Mammary epithelial cell (primary cell): ENCODE measurements at regions of chr2 and their contacts with region 1.

Region 1: GRCh38 chr2:181715033-181715630 is 34.8 kb upstream of the NEUROD1 start:
- DNase-seq: peak; percentile 63
- H3K4me3 ChIP-seq: no peak overlapping the region
- H3K27ac ChIP-seq: no peak overlapping the region
- H3K4me1 ChIP-seq: no peaks in the 10 kb centered on the region
- H3K27me3 ChIP-seq: peaks cover 2% of the 10 kb centered on the region
- CTCF ChIP-seq: peak; percentile 66 to 69

Region 2: GRCh38 chr2:181466661-181467576 is 248.2 kb before region 1 on chr2:
- CTCF ChIA-PET with region 1: no interaction called
- dilution Hi-C with region 1: no loop called
- in situ Hi-C with region 1: no loop called
- intact Hi-C with region 1: loop called (anchors 1 kb)
- DNase-seq: peak; percentile 25
- H3K4me3 ChIP-seq: no peak overlapping the region
- H3K27ac ChIP-seq: peak overlapping the region; percentile 66
- H3K4me1 ChIP-seq: peaks cover 10% of the 10 kb centered on the region
- H3K27me3 ChIP-seq: no peaks in the 10 kb centered on the region
- CTCF ChIP-seq: peak; percentile 84 to 85

Region 3: GRCh38 chr2:181573140-181573736 is 141.9 kb before region 1 on chr2:
- CTCF ChIA-PET with region 1: interaction called, 26 read pairs
- dilution Hi-C with region 1: no loop called
- in situ Hi-C with region 1: loop called (anchors 10 to 25 kb)
- intact Hi-C with region 1: loop called (anchors 1 kb)
- DNase-seq: peak; percentile 12
- H3K4me3 ChIP-seq: no peak overlapping the region
- H3K27ac ChIP-seq: no peak overlapping the region
- H3K4me1 ChIP-seq: peaks cover 4% of the 10 kb centered on the region
- H3K27me3 ChIP-seq: no peaks in the 10 kb centered on the region
- CTCF ChIP-seq: peak; percentile 39 to 65

Region 4: DNA sequence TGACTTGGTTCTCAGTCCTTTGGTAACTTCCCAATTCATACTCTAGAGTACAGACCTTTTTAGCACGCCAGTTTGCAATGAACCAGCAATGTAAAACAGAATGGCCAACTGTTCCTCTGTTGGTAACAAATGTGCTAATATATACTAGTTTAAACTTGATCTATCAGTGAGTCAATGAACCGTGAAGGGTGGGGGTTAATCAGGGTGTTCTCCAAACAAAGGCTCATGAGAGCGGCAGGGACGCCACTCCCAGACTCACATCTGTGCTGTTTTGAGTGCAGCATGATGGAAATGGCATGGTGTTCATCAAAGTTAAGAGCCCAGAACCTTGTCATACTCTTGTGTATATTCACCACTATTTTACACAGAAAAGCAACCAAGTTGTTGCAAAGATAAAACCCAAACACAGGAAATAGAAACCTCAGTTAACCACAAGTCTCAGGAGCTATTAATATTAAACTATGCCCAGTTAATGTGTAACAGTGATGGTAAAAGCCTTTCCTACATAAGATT is 128.5 kb before region 1 on chr2:
- CTCF ChIA-PET with region 1: no interaction called
- dilution Hi-C with region 1: no loop called
- in situ Hi-C with region 1: loop called in 1 of 2 experiments (anchors 25 kb)
- intact Hi-C with region 1: no loop called
- DNase-seq: peak; percentile 53
- H3K4me3 ChIP-seq: no peak overlapping the region
- H3K27ac ChIP-seq: no peak overlapping the region
- H3K4me1 ChIP-seq: peaks cover 11% of the 10 kb centered on the region
- H3K27me3 ChIP-seq: no peaks in the 10 kb centered on the region
- CTCF ChIP-seq: no peak

Region 5: GRCh38 chr2:182897137-182897536 is 1182.0 kb after region 1 on chr2:
- CTCF ChIA-PET with region 1: no interaction called
- dilution Hi-C with region 1: no loop called
- in situ Hi-C with region 1: no loop called
- intact Hi-C with region 1: no loop called
- DNase-seq: peak; percentile 36
- H3K4me3 ChIP-seq: no peak overlapping the region
- H3K27ac ChIP-seq: no peak overlapping the region
- H3K4me1 ChIP-seq: no peaks in the 10 kb centered on the region
- H3K27me3 ChIP-seq: no peaks in the 10 kb centered on the region
- CTCF ChIP-seq: no peak